ENCODE measurements at regions of chr16 and their contacts with region 1.

Region 1: DNA sequence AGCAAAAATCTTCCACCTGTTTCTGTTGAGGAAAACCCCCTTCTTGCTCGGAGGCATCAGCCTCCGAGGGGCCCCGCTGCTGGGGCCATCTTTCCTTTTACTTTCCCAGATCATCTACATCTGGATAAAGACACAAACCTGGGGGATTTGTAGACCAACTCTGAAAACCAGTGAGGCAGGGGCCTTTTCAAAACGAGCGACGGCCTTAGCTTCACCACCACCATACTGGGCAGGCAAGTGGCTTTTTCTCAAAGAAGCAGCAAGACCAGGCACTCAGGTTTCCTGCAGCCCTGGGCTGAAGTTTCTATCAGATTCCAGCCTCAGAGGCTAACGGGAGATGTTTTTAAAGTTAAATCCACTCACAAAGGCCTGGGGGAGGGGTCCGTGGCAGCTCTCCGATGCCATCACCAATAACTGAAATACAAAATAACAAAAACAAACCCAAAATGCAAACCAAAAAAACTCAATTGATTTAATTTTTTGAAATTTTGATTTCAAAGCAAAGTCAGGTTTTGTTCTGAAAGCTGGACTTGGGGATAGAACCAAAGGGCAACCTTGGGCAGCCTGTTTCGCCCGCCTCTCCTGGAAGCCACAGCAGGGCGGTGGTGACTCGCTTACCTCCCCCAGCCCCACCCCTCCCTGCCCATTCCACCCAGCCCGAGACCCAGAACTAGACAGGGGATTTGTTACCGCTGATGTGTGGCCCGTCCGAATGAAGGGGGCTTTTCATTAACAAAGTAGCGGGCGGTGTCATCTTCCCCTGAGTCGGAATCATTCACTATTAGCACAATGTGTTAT is 55.8 kb downstream of the SALL1 start:
- DNase-seq: no peak
- H3K4me3 ChIP-seq: no peak overlapping the region
- H3K27ac ChIP-seq: no peak overlapping the region
- H3K4me1 ChIP-seq: no peaks in the 10 kb centered on the region
- H3K27me3 ChIP-seq: no peaks in the 10 kb centered on the region
- CTCF ChIP-seq: no peak
- POLR2A ChIP-seq: no peak

Region 2: DNA sequence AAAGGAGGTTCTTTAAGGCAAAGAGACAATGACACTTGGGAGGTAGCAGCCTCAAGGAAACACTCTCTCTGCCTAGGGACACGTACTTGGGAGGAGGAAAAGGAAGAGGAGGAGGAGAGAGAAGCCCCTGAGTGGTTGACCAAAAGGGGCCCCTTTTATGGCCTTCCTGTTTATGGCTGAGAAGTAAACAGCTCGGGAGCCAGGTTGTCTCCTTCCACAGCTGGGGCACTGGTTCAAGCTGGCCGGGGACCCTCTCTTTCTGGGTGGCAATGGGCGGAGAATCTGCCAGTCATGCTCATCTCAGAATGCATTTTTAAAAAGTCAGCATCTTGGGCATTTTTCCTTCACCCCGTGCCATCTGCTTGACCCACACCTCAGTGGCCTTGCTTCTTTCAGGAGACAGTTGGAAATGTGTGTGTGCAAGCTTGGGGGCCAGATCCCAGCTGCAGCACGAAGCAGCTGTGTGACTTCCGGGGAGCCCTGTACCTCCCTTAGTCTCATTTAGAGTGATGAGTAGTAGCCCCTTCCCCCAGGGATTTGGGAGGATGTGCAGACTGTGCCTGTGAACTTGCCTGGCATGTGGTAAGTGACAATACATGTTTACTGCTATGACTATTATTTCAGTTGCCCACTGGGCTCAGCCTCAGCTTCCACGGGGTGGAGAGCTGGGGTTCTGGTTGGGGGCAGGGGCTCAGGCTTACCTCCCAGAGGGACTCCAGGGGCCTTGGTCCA is 89.6 kb after region 1 on chr16:
- intact Hi-C with region 1: no loop called
- DNase-seq: no peak
- H3K4me3 ChIP-seq: no peak overlapping the region
- H3K27ac ChIP-seq: no peak overlapping the region
- H3K4me1 ChIP-seq: no peaks in the 10 kb centered on the region
- H3K27me3 ChIP-seq: no peaks in the 10 kb centered on the region
- CTCF ChIP-seq: no peak
- POLR2A ChIP-seq: no peak

Region 3: GRCh38 chr16:51317575-51317974 is 222.3 kb after region 1 on chr16:
- intact Hi-C with region 1: loop called (anchors 5 kb)
- DNase-seq: no peak
- H3K4me3 ChIP-seq: no peak overlapping the region
- H3K27ac ChIP-seq: no peak overlapping the region
- H3K4me1 ChIP-seq: no peaks in the 10 kb centered on the region
- H3K27me3 ChIP-seq: no peaks in the 10 kb centered on the region
- CTCF ChIP-seq: no peak
- POLR2A ChIP-seq: no peak